ENCODE measurements at regions of chr6 and their contacts with region 1.

Region 1: GRCh38 chr6:135128268-135128914 is 52.7 kb upstream of the MYB start:
- DNase-seq: peak; percentile 83
- H3K4me3 Mint-ChIP-seq: peak overlapping the region; percentile 26
- H3K27ac Mint-ChIP-seq: peak overlapping the region; percentile 74
- H3K4me1 Mint-ChIP-seq: peaks cover 43% of the 10 kb centered on the region
- H3K27me3 Mint-ChIP-seq: no peaks in the 10 kb centered on the region

Region 2: GRCh38 chr6:135014353-135014832 is 114.0 kb before region 1 on chr6:
- CTCF ChIA-PET with region 1: no interaction called
- intact Hi-C with region 1: loop called (anchors 1 kb)
- DNase-seq: peak; percentile 24
- H3K4me3 Mint-ChIP-seq: peak overlapping the region; percentile 2
- H3K27ac Mint-ChIP-seq: no peak overlapping the region
- H3K4me1 Mint-ChIP-seq: peaks cover 60% of the 10 kb centered on the region
- H3K27me3 Mint-ChIP-seq: no peaks in the 10 kb centered on the region

Region 3: DNA sequence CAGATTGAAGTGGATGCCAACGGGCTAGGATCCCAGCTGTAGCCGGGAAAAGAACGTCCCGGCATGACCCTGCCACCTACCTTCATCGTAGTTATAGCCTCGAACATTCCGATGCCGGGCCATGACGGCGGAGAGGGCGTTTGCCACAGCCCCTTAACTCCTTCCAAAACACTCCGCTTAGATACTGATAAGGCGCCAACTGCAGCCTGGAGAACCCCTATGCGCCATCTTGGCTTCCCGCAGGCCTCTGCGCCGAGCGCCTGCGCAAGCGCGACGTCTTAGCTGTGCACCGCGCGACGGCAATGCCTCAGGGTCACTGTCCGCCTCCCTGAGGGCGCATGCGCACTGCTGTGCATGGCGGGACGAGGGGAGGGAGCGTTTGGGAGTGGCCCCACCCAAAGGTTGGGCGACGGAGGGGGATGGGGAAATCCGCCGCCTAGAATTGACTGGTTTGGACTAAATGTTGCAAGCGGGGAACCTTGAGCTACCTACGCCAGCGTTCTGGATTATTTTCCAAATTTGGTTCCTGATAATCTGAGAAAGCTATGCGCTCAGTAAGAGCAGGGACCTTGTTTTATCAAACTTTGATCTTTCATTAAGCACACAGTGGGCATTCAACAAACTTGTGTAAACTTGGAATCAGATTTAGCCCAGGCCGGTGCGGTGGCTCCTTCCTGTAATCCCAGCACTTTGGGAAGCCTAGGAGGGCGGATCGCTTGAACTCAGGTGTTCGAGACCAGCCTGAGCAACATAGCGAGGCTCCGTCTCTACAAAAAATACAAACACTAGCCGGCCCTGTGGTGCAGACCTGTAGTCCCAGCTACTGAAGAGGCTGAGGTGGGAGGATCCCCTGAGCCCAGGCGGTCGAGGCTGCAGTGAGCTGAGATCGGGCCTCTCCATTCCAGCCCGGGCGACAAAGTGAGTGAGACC is 73.6 kb before region 1 on chr6 and contains the start of gene HBS1L:
- CTCF ChIA-PET with region 1: interaction called, 5 read pairs
- intact Hi-C with region 1: loop called (anchors 1 kb)
- DNase-seq: peak; percentile 98
- H3K4me3 Mint-ChIP-seq: peak within 1 kb of the TSS; percentile 90
- H3K27ac Mint-ChIP-seq: peak within 1 kb of the TSS; percentile 96
- H3K4me1 Mint-ChIP-seq: peaks cover 23% of the 10 kb centered on the region
- H3K27me3 Mint-ChIP-seq: no peaks in the 10 kb centered on the region
- total RNA-seq, gene HBS1L: 150 to 153 TPM

Region 4: DNA sequence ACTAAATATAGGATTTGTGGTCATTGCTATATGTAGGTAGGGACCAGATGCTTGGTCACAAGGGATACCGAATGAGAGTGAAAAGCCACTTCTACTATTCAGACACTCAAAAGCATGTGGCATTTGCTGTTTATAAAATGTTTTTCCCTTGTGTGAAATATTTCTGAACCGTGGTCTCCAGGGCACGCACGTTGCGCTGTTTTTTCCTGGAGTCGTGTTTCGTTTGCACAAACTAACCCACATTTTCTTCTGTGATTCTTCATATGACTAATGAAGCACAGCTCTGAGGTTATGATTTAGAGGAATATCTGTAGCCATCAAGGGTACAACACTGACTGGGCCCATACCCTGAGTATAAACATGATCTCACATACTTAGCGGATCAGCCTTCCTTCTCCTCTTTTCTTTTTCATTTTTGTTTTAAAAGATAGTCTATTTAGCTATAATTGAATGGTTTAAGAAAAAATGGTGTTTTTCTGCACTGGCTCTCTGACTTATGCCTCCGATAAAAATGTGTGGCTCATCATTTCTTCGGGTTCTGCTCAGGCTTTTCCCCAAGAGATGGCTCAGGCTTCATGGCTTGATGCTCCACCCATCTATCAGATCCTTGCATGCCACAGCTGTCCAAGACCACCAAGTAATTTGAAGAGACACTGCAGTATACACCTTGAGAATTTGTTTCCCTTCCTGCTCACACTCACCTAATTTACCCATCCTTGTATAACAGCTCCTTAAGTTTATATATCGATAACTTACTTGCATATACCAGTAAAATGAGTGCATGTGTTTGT is 13.8 kb before region 1 on chr6:
- CTCF ChIA-PET with region 1: interaction called, 10 read pairs
- intact Hi-C with region 1: loop called (anchors 1 kb)
- DNase-seq: peak; percentile 75
- H3K4me3 Mint-ChIP-seq: no peak overlapping the region
- H3K27ac Mint-ChIP-seq: peak overlapping the region; percentile 74
- H3K4me1 Mint-ChIP-seq: peaks cover 72% of the 10 kb centered on the region
- H3K27me3 Mint-ChIP-seq: no peaks in the 10 kb centered on the region

Region 5: DNA sequence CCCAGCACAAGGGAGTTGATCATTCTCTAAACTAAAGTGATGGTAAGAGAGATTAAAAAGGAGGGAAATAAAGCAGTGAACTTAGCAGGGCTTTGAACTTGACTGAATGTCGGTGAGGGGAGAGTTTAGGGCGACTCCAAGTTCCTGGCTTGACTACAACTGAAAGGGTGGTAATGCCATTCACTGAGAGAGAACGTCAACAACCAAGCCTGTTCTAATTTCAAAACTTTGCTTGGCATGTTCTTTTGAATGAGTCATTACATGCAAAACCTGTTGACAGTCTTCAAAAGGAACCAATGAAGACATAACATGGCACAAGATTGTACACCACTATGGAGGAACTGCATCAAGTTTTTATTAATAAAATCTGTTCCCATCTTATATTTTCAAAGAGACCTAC is 42.5 kb after region 1 on chr6:
- CTCF ChIA-PET with region 1: no interaction called
- intact Hi-C with region 1: loop called (anchors 1 kb)
- DNase-seq: peak; percentile 65
- H3K4me3 Mint-ChIP-seq: no peak overlapping the region
- H3K27ac Mint-ChIP-seq: peak overlapping the region; percentile 88
- H3K4me1 Mint-ChIP-seq: peaks cover 17% of the 10 kb centered on the region
- H3K27me3 Mint-ChIP-seq: no peaks in the 10 kb centered on the region

Region 6: GRCh38 chr6:136446579-136447182 is 1318.3 kb after region 1 on chr6:
- CTCF ChIA-PET with region 1: no interaction called
- intact Hi-C with region 1: no loop called
- DNase-seq: no peak
- H3K4me3 Mint-ChIP-seq: no peak overlapping the region
- H3K27ac Mint-ChIP-seq: no peak overlapping the region
- H3K4me1 Mint-ChIP-seq: no peaks in the 10 kb centered on the region
- H3K27me3 Mint-ChIP-seq: no peaks in the 10 kb centered on the region